AG04450 (cell line): ENCODE measurements at regions of chr5 and their contacts with region 1.

Region 1: DNA sequence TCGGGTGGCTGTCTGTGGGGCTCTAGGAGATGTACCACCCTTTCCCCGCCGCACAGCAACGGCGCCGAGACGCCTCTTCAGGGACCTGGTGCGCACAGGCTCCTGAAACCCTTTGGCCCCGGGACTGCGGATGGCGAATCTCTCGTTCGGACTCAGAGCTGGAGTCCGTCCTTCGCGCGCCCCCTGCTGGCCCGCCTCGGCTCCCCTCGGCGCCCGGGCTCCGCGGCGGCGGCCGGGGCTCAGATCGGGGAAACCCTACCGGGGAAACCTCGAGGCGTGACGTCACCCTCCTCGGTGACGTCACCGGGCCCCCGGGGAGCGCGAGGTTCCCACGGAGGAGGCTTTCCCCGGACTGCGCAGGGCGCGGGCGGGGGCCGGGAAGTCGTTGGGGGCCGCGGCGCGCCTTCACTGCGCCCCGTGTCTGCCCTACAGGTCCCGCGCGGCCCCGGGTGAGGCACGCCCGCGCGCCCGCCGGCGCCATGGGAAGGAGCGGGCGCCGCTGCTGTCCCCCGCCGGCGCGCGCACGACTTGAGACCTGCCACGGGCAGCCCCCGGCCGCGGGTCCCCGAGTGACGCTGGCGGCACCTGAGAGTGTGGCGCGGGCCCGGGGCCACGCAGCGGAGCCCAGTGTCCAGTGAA is 7.9 kb downstream of the PRR7 start:
- DNase-seq: no peak
- H3K4me3 ChIP-seq: peak overlapping the region; percentile 51
- H3K27ac ChIP-seq: peak overlapping the region; percentile 11
- H3K27me3 ChIP-seq: no peaks in the 10 kb centered on the region
- CTCF ChIP-seq: peak; percentile 77

Region 2: GRCh38 chr5:177419051-177419450 is 35.5 kb before region 1 on chr5:
- CTCF ChIA-PET with region 1: interaction called, 10 read pairs
- POLR2A ChIA-PET with region 1: no interaction called
- DNase-seq: peak; percentile 74
- H3K4me3 ChIP-seq: no peak overlapping the region
- H3K27ac ChIP-seq: no peak overlapping the region
- H3K27me3 ChIP-seq: no peaks in the 10 kb centered on the region
- CTCF ChIP-seq: no peak

Region 3: DNA sequence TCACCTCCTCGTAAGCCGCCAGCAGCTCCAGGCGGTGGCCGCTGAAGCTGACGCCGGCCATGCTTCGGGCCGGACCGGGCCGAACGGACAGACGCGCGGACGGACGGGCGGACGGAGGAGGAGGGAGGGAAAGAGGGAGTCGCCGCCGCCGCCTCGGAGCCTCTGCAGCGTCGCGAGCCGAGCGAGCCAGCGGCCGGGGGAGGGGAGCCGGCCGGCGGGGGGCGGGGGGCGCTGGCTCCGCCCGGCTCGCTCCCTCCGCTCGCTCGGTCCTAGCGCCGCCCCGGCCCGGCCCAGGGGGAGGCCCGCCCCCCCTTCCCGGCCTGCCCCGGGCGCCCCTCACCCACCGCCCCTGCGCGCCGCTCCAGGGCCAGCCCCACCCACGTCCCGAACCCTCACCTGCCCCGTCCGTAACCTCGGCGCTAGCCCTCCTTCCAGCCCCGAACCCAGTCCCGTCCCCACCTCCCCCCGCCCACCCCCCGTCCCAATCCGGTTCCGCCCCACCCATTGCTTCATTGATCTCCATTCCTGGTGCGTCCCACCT is 19.0 kb after region 1 on chr5 and contains the start of gene DBN1:
- CTCF ChIA-PET with region 1: interaction called, 13 read pairs
- POLR2A ChIA-PET with region 1: interaction called, 20 read pairs
- DNase-seq: no peak
- H3K4me3 ChIP-seq: peak within 1 kb of the TSS; percentile 92
- H3K27ac ChIP-seq: peak within 1 kb of the TSS; percentile 68
- H3K27me3 ChIP-seq: no peaks in the 10 kb centered on the region
- CTCF ChIP-seq: no peak
- polyA plus RNA-seq, gene DBN1: 146 and 164 TPM in 2 replicates

Region 4: DNA sequence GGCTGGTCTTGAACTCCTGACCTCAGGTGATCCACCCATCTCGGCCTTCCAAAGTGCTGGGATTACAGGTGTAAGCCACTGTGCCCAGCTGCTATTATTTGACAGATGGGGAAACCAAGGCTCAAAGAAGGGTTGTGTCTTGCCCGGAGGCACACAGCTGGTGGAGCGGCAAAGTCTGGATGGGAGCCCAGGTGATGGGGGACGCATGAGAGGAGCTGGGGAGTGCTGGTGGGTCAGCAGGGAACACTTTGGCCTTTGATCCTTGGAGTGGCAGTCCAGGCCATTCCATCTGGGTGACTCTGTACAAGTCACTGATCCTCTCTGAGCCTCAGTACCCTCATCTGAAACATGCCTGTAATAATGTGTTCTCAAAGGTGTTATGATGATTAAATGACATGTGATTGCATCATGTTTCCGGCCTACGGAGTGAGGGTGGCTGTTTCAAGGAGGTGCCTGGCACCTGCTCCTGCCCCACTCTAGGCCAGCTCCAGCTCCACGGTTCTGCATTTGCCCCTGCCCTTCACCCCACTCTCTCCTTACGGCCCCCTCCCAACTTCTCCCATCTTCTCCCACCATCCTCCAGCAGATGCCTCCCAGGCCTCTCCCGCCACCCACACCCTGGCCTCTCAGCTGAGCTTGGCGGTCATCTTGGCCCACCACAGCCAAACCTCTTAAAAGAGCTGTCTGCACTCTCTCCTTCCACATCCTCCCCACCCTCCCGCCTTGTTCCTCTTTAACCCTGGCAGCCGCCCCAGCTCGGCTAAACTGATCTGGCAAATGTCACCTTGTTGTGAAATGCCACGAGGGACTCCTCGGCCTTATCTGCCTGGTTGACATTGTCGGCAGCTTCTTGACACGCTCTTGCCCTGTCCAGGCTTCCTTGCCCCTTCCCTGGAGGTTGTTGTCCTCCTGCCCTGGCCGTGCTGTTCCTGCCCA is 24.5 kb after region 1 on chr5:
- CTCF ChIA-PET with region 1: interaction called, 11 read pairs
- POLR2A ChIA-PET with region 1: interaction called, 9 read pairs
- DNase-seq: no peak
- H3K4me3 ChIP-seq: no peak overlapping the region
- H3K27ac ChIP-seq: peak overlapping the region; percentile 77
- H3K27me3 ChIP-seq: no peaks in the 10 kb centered on the region
- CTCF ChIP-seq: no peak